ENCODE measurements at regions of chr10 and their contacts with region 1.

Region 1: GRCh38 chr10:101012525-101013364 is 13.1 kb downstream of the LZTS2 start:
- DNase-seq: peak; percentile 46
- ATAC-seq: peak; percentile 89
- H3K4me3 Mint-ChIP-seq: no peak overlapping the region
- H3K27ac Mint-ChIP-seq: peak overlapping the region; percentile 1
- H3K4me1 Mint-ChIP-seq: peaks cover 15% of the 10 kb centered on the region
- H3K27me3 Mint-ChIP-seq: peaks cover 18% of the 10 kb centered on the region
- CTCF ChIP-seq: peak; percentile 73

Region 2: GRCh38 chr10:100562008-100562711 is 450.6 kb before region 1 on chr10:
- CTCF ChIA-PET with region 1: interaction called, 3 read pairs
- POLR2A ChIA-PET with region 1: no interaction called
- intact Hi-C with region 1: loop called (anchors 1 kb)
- DNase-seq: peak; percentile 62
- ATAC-seq: peak; percentile 98
- H3K4me3 Mint-ChIP-seq: peak overlapping the region; percentile 20
- H3K27ac Mint-ChIP-seq: no peak overlapping the region
- H3K4me1 Mint-ChIP-seq: peaks cover 15% of the 10 kb centered on the region
- H3K27me3 Mint-ChIP-seq: peaks cover 46% of the 10 kb centered on the region
- CTCF ChIP-seq: no peak

Region 3: DNA sequence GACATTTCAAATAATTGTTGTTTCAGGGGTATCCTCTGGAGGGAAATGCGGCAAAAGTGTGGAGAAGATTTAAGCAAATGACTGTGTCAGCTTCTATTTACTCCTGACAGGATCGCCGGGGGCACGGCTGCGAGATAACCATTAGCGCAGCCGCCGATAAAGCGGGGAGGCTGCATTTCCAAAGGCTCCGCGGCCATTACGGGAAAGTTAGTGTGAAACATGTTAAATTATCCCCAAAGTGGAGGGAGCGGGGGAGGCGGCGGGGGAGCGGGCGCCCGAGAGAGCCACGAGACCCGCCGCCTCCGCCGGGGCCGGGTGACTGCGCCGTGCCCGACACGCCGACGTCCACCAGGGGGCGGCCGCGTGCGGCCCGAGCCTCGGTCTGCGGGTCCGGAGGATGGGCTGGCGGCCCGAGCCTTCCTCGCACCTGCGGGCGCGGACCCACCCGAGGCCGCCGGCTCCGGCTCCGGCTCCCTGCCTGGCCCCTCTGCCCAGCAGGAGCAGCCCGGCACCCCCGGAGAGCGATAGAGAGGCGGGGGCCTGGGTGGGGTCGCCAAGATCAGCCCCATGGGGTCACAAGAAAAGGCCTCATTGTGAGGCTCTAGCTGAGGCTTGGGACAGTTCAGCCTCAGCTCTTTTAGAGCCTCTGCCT is 341.8 kb before region 1 on chr10:
- CTCF ChIA-PET with region 1: no interaction called
- POLR2A ChIA-PET with region 1: no interaction called
- intact Hi-C with region 1: loop called (anchors 1 kb)
- DNase-seq: peak; percentile 67
- ATAC-seq: peak; percentile 82
- H3K4me3 Mint-ChIP-seq: peak overlapping the region; percentile 32
- H3K27ac Mint-ChIP-seq: no peak overlapping the region
- H3K4me1 Mint-ChIP-seq: peaks cover 8% of the 10 kb centered on the region
- H3K27me3 Mint-ChIP-seq: peaks cover 58% of the 10 kb centered on the region
- CTCF ChIP-seq: no peak

Region 4: GRCh38 chr10:100912605-100913469 is 99.9 kb before region 1 on chr10 and contains the start of gene SLF2:
- CTCF ChIA-PET with region 1: no interaction called
- POLR2A ChIA-PET with region 1: no interaction called
- intact Hi-C with region 1: loop called (anchors 5 kb)
- DNase-seq: peak; percentile 82
- ATAC-seq: peak; percentile 97
- H3K4me3 Mint-ChIP-seq: peak within 1 kb of the TSS; percentile 99
- H3K27ac Mint-ChIP-seq: peak within 1 kb of the TSS; percentile 96
- H3K4me1 Mint-ChIP-seq: peaks cover 33% of the 10 kb centered on the region
- H3K27me3 Mint-ChIP-seq: no peaks in the 10 kb centered on the region
- CTCF ChIP-seq: no peak
- total RNA-seq, gene SLF2: 29.9 and 35.5 TPM in 2 replicates

Region 5: DNA sequence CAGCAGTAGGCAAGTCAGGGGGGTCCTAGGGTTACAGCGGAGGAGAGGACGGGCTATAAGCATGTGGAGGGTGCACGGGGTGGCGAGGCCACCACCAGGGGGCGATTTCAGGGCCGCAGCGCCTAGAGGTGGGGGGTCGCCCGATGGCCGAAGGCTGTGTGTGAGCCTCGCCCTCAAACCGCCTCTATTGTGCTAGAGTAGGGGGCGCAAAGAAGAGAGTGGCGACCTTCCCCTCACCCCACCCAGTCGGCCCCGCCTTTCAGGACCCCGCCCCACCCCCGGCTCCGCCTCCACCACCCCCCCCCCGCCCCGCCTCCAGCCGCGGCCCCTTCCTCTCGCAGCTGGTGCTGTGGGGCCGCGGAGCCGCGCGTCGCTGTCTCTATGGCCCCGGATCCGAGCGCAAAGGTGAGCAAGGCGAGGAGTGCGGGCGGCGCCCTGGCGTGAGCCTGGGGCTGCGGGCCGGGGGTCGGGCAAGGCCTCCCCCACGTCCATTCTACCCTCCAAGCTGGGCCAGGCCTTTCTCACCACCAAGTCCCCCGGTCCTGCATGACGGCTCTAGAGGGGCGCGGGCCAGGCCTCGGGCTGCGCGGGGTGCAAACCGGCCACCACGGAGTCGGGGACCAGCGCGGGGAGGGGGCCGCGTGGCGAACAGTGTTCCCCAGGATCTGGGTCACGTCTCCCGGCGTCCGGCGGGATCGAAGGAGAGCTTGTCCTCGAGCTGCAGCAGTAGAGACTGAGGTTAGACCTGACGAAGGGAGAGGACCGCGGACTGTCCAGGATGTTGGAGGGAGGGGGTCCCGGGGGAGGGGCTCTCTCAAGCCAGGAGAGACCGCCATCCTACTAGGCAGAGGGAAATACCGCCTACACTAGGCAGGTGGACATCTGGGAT is 43.3 kb before region 1 on chr10 and contains the start of gene SEMA4G:
- CTCF ChIA-PET with region 1: interaction called, 4 read pairs
- POLR2A ChIA-PET with region 1: interaction called, 3 read pairs
- intact Hi-C with region 1: loop called (anchors 1 kb)
- DNase-seq: peak; percentile 58
- ATAC-seq: peak; percentile 88
- H3K4me3 Mint-ChIP-seq: peak within 1 kb of the TSS; percentile 64
- H3K27ac Mint-ChIP-seq: no peak within 1 kb of the TSS
- H3K4me1 Mint-ChIP-seq: peaks cover 11% of the 10 kb centered on the region
- H3K27me3 Mint-ChIP-seq: no peaks in the 10 kb centered on the region
- CTCF ChIP-seq: no peak
- total RNA-seq, gene SEMA4G: 0.60 and 0.78 TPM in 2 replicates

Region 6: GRCh38 chr10:101031128-101031795 is 18.5 kb after region 1 on chr10 and contains the starts of genes PDZD7 and SFXN3:
- CTCF ChIA-PET with region 1: interaction called, 12 read pairs
- POLR2A ChIA-PET with region 1: no interaction called
- intact Hi-C with region 1: loop called (anchors 1 kb)
- DNase-seq: peak; percentile 93
- ATAC-seq: peak; percentile 91
- H3K4me3 Mint-ChIP-seq: peak within 1 kb of the TSS; percentile 92
- H3K27ac Mint-ChIP-seq: peak within 1 kb of the TSS; percentile 69
- H3K4me1 Mint-ChIP-seq: peaks cover 20% of the 10 kb centered on the region
- H3K27me3 Mint-ChIP-seq: peaks cover 19% of the 10 kb centered on the region
- CTCF ChIP-seq: no peak
- total RNA-seq, gene PDZD7: 0.11 TPM in 1 of 2 replicates, not detected in the other
- total RNA-seq, gene SFXN3: 9.5 and 9.8 TPM in 2 replicates

Region 7: DNA sequence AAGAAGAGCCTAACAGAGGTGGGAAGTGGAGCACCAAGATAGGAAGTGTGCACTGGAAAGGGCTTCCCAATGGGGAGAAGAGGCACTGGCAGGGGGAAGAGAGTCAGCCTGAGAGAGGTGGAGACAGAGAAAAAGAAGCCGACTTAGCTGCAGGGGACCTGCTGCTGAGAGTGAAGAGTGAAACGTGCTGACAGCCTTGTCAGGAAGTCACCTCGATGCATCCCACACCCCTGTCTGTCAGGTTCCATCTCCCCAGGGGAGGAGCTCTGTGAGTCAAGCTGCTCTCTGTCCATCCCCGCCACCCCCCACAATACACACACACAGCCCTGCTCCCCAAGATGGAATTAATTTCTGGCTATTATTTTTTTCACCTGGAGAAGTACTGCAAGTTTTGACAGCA is 63.0 kb after region 1 on chr10:
- CTCF ChIA-PET with region 1: no interaction called
- POLR2A ChIA-PET with region 1: no interaction called
- intact Hi-C with region 1: no loop called
- DNase-seq: no peak
- ATAC-seq: no peak
- H3K4me3 Mint-ChIP-seq: no peak overlapping the region
- H3K27ac Mint-ChIP-seq: no peak overlapping the region
- H3K4me1 Mint-ChIP-seq: peaks cover 28% of the 10 kb centered on the region
- H3K27me3 Mint-ChIP-seq: peaks cover 36% of the 10 kb centered on the region
- CTCF ChIP-seq: no peak